ACHN (cell line): ENCODE measurements at regions of chr10 and their contacts with region 1.

Region 1: DNA sequence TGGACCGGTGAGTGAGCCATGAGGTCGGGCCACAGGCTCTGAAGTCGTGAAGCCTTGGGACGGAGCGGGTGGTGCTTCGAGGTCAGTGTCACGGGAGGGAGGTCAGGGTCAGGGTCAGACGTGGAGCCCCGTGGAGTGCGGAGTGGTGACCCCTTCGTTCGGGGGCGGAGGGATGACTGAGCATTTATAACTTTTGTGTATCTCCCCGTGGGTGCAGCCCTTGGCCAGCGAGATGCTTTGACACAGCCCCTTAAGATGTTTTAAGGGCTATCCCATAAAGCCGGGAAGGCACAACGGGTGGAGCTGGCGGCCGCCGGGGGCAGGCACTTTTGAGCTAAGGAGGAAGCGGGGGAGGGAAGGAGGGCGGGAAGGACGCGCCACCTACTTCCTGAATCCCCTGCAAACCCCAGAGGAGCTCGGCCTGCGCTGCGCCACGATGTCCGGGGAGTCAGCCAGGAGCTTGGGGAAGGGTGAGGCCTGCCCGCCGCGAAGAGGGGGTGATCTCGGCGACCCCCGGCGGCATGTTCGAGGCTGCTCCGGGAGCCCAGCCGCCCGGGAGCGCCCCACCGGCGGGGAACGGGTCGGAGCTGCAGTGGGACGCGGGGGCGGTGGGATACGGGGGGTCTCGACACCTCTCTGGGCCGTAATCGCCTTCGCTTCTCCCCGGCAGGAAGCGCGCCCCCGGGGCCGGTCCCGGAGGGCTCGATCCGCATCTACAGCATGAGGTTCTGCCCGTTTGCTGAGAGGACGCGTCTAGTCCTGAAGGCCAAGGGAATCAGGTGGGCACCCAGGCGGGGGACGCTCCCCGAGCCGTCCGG is at the start of gene GSTO1:
- DNase-seq: peak; percentile 80

Region 2: GRCh38 chr10:104300736-104301292 is 46.1 kb after region 1 on chr10:
- in situ Hi-C with region 1: loop called (anchors 10 kb)
- DNase-seq: peak; percentile 98

Region 3: GRCh38 chr10:104353325-104354048 is 98.8 kb after region 1 on chr10 and contains the start of gene CFAP58:
- in situ Hi-C with region 1: no loop called
- DNase-seq: peak; percentile 96